HepG2 (cell line): ENCODE measurements at regions of chr1 and their contacts with region 1.

Region 1: GRCh38 chr1:162497723-162498500 is at the start of gene UHMK1:
- DNase-seq: peak; percentile 89
- ATAC-seq: peak; percentile 100
- H3K4me3 ChIP-seq: peak within 1 kb of the TSS; percentile 91 to 95 (median 94)
- H3K27ac ChIP-seq: peak within 1 kb of the TSS; percentile 81
- H3K4me1 ChIP-seq: peaks cover 21% of the 10 kb centered on the region
- H3K27me3 ChIP-seq: no peaks in the 10 kb centered on the region; a peak in 2 of 5 replicates
- CTCF ChIP-seq: no peak
- EP300 ChIP-seq: no peak
- POLR2A ChIP-seq: peak; percentile 63 to 86
- RAD21 ChIP-seq: no peak
- total RNA-seq, gene UHMK1: 20.0 and 27.9 TPM in 2 replicates

Region 2: DNA sequence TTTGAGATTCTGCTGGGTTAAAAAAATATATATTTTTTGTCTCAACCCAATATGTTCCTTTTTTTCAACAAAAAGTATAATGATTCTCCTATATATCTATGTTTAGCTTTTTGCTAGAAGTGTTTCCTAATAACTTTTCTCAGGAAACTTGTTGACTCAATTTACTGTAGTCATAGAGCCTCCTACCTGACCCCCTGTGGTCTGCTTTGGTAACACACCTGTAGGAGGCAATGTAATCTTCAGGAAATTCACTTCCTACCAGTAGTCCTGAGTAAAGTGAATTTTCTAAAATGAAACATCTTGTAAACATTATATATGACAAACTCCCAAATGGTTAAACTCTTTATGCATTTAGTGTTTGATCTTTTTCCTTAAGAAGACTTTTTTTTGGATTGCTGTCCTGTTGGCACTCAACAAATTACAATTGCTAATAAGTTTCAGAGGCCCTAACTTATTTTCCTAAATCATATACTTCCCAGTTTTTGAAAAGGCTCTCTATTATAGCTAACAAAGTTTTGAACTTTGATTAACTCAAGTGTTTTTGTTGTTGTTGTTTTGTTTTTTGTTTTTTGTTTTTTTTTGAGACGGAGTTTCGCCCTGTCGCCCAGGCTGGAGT is 592.5 kb before region 1 on chr1:
- CTCF ChIA-PET with region 1: no interaction called
- POLR2A ChIA-PET with region 1: no interaction called
- in situ Hi-C with region 1: no loop called
- intact Hi-C with region 1: no loop called
- DNase-seq: peak; percentile 22
- ATAC-seq: peak; percentile 88
- H3K4me3 ChIP-seq: no peak overlapping the region
- H3K27ac ChIP-seq: no peak overlapping the region
- H3K4me1 ChIP-seq: peaks cover 3% of the 10 kb centered on the region; the same call in 1 of the 2 replicates
- H3K27me3 ChIP-seq: no peaks in the 10 kb centered on the region
- CTCF ChIP-seq: peak; percentile 51
- EP300 ChIP-seq: no peak
- POLR2A ChIP-seq: no peak
- RAD21 ChIP-seq: no peak

Region 3: GRCh38 chr1:162422662-162423375 is 75.1 kb before region 1 on chr1:
- CTCF ChIA-PET with region 1: no interaction called
- POLR2A ChIA-PET with region 1: no interaction called
- in situ Hi-C with region 1: no loop called
- intact Hi-C with region 1: loop called (anchors 10 kb)
- DNase-seq: no peak
- ATAC-seq: no peak
- H3K4me3 ChIP-seq: no peak overlapping the region
- H3K27ac ChIP-seq: no peak overlapping the region
- H3K4me1 ChIP-seq: no peaks in the 10 kb centered on the region
- H3K27me3 ChIP-seq: peaks cover 0 to 10% of the 10 kb centered on the region in 2 experiments; a peak in 2 of 5 replicates
- CTCF ChIP-seq: no peak
- EP300 ChIP-seq: no peak
- POLR2A ChIP-seq: no peak
- RAD21 ChIP-seq: no peak

Region 4: GRCh38 chr1:162561037-162561616 is 63.2 kb after region 1 on chr1:
- CTCF ChIA-PET with region 1: no interaction called
- POLR2A ChIA-PET with region 1: no interaction called
- in situ Hi-C with region 1: no loop called
- intact Hi-C with region 1: loop called (anchors 2 kb)
- DNase-seq: peak; percentile 93
- ATAC-seq: peak; percentile 94
- H3K4me3 ChIP-seq: peak overlapping the region; percentile 79 to 100 (median 96)
- H3K27ac ChIP-seq: peak overlapping the region; percentile 95
- H3K4me1 ChIP-seq: peaks cover 43% of the 10 kb centered on the region
- H3K27me3 ChIP-seq: no peaks in the 10 kb centered on the region; a peak in 1 of 5 replicates
- CTCF ChIP-seq: no peak
- EP300 ChIP-seq: no peak
- POLR2A ChIP-seq: peak in 1 of 2 experiments; percentile 28; a peak in 2 of 4 replicates
- RAD21 ChIP-seq: no peak